Heart left ventricle (tissue), 16 donors: ENCODE measurements at regions of chr3 and their contacts with region 1.

Region 1: GRCh38 chr3:61561374-61562041 is at the start of gene PTPRG:
- DNase-seq: peak; percentile 91 to 94 (median 92)
- ATAC-seq: peak; percentile 59 to 84 (median 78)
- H3K4me3 ChIP-seq: peak within 1 kb of the TSS; percentile 65 to 97 (median 88)
- H3K27ac ChIP-seq: peak within 1 kb of the TSS; percentile 91 to 98 (median 96)
- H3K4me1 ChIP-seq: peaks cover 0 to 40% (median 16%) of the 10 kb centered on the region in 12 donors
- H3K27me3 ChIP-seq: peaks cover 0 to 28% (median 0%) of the 10 kb centered on the region in 9 donors
- CTCF ChIP-seq: no peak
- POLR2A ChIP-seq: peak in 1 of 2 donors; percentile 77
- total RNA-seq, gene PTPRG: 23.5 to 48.5 (median 35.6) TPM

Region 2: DNA sequence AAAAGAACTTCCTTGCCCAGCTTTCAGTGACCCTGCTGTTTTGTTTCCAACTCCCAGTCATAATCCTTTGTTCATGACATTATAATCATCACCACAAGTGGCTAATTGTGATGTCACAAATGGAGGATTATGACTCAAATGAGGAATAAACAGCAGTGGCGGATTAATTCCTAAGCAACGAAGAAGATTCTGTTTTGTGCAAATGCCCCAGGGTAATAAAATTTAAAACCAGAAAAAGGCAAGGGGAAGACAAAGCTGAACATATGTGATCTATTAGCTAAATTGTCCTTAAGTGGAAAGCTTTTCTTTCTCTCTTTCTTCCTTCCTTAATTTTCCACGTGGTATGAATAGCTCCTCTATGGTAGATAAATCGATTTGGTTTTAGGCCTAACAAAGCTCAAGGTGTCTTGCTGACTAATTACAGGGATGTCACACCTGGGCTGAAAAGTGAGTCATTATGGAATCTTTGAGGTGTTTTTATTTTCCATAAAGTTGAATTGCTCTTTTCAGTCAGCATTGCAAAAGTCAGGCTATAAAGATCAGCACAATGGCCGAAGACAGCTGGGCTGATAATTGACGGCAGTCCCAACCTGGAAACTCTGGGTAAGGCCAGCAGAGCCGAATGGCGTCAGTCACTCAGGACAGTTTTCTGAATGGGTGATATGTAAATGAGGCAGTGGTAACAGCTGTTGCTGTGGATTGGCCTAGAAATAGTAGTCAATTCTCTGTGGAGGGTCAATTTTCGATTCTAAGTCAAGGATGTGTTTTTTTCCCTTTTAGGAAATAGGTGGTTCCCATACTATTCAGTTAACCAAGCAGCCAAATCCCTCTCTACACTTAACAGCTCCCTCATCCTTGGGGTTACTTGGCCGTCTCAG is 121.4 kb after region 1 on chr3:
- intact Hi-C with region 1: loop called in 2 of 10 experiments (anchors 10 kb)
- DNase-seq: no peak
- ATAC-seq: peak in 2 of 4 donors; percentile 23 to 43
- H3K4me3 ChIP-seq: no peak overlapping the region
- H3K27ac ChIP-seq: peak overlapping the region in 5 of 12 donors; percentile 18 to 59 (median 31)
- H3K4me1 ChIP-seq: peaks cover 5 to 53% (median 25%) of the 10 kb centered on the region in 12 donors
- H3K27me3 ChIP-seq: no peaks in the 10 kb centered on the region
- CTCF ChIP-seq: no peak
- POLR2A ChIP-seq: no peak

Region 3: GRCh38 chr3:61768284-61769037 is 207.0 kb after region 1 on chr3:
- intact Hi-C with region 1: loop called in 1 of 10 experiments (anchors 10 kb)
- DNase-seq: no peak
- ATAC-seq: peak in 3 of 4 donors; percentile 24 to 31 (median 26)
- H3K4me3 ChIP-seq: no peak overlapping the region
- H3K27ac ChIP-seq: no peak overlapping the region
- H3K4me1 ChIP-seq: peaks cover 0 to 51% (median 23%) of the 10 kb centered on the region in 12 donors
- H3K27me3 ChIP-seq: no peaks in the 10 kb centered on the region
- CTCF ChIP-seq: no peak
- POLR2A ChIP-seq: no peak

Region 4: GRCh38 chr3:61858056-61858455 is 296.5 kb after region 1 on chr3:
- intact Hi-C with region 1: loop called in 6 of 10 experiments (anchors 2 to 5 kb)
- DNase-seq: no peak
- ATAC-seq: peak in 2 of 4 donors; percentile 53 to 59
- H3K4me3 ChIP-seq: no peak overlapping the region
- H3K27ac ChIP-seq: peak overlapping the region in 1 of 12 donors; percentile 10
- H3K4me1 ChIP-seq: peaks cover 0 to 83% (median 40%) of the 10 kb centered on the region in 12 donors
- H3K27me3 ChIP-seq: no peaks in the 10 kb centered on the region
- CTCF ChIP-seq: peak; percentile 34 to 78 (median 66)
- POLR2A ChIP-seq: no peak

Region 5: DNA sequence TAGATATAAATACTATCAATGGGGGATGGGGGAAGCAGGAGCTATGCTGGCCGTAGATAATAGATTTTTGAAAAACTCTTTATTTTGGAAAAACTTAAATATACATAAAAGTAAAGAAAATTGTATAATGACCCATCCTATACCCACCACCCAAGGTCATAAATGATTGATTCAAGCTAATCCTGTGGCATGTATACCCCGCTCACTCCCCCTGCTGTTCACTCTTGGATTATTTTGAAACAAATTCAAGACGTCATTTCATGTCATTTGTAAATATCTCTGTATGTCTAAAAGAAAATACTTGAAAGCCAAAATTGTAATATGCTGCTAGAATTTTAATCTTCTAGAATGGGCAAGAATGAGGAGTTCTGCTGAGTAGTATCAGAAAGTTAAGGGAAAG is 570.1 kb after region 1 on chr3:
- intact Hi-C with region 1: loop called in 2 of 10 experiments (anchors 10 kb)
- DNase-seq: no peak
- ATAC-seq: no peak
- H3K4me3 ChIP-seq: no peak overlapping the region
- H3K27ac ChIP-seq: no peak overlapping the region
- H3K4me1 ChIP-seq: peaks cover 5 to 51% (median 27%) of the 10 kb centered on the region in 12 donors
- H3K27me3 ChIP-seq: no peaks in the 10 kb centered on the region
- CTCF ChIP-seq: peak in 11 of 12 donors; percentile 13 to 59 (median 51)
- POLR2A ChIP-seq: no peak